Caco-2 (cell line): ENCODE measurements at regions of chr10 and their contacts with region 1.

Region 1: GRCh38 chr10:71270301-71271220 is 48.5 kb upstream of the SLC29A3 start:
- DNase-seq: peak; percentile 80 to 86
- H3K4me3 ChIP-seq: no peak overlapping the region
- H3K4me3 Mint-ChIP-seq: no peak overlapping the region
- H3K27ac Mint-ChIP-seq: peak overlapping the region; percentile 60
- H3K4me1 ChIP-seq: 0 out of 2 replicates have a peak, but pooled peaks cover 14% of the 10 kb centered on the region
- H3K4me1 Mint-ChIP-seq: peaks cover 19% of the 10 kb centered on the region
- H3K27me3 ChIP-seq: no peaks in the 10 kb centered on the region
- H3K27me3 Mint-ChIP-seq: no peaks in the 10 kb centered on the region
- CTCF ChIP-seq: peak; percentile 79 to 98

Region 2: DNA sequence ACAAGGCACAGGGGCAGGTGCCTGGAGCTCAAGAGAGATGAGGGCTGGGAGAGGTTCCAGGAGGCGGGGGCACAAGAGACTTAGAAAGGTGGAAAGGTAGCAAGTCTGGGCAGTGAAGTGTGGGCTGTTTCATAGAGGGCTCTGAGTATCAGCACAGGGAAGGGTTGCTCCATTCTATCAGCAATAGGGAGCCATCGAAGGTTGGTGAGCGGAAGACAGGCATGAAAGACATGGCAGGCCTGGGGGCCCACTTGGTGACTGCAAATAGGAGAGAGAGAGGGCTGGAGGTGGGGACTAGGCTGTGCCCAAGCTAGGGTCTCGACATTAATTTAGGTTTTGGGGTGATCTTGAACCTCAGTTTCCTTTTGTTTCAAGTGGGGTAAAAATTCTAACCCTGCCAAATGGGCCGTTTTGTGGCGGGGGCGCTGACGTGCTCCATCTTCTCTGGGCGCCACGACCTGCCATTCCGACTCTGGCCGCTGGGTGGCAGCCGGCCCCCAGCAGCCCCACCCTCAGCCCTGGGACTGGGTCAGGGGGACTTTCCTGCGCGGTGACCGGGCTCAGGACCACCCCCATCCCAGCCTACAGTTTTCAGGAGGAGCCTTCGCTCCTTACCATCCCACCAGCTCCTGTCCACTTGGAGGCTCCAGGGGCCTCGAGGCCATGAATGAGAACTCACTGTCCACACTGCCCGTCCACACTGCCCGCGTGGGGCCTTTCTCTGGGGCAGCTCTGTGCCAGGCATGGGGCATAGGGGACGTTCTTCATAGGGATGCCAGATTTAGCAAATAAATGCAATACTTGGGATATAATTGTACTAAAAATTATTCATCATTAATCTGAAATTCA is 345.0 kb before region 1 on chr10:
- CTCF ChIA-PET with region 1: interaction called, 3 read pairs
- POLR2A ChIA-PET with region 1: no interaction called
- intact Hi-C with region 1: loop called (anchors 5 kb)
- DNase-seq: peak in 1 of 2 experiments; percentile 83
- H3K4me3 ChIP-seq: no peak overlapping the region
- H3K4me3 Mint-ChIP-seq: no peak overlapping the region
- H3K27ac Mint-ChIP-seq: no peak overlapping the region
- H3K4me1 ChIP-seq: no peaks in the 10 kb centered on the region
- H3K4me1 Mint-ChIP-seq: peaks cover 8% of the 10 kb centered on the region
- H3K27me3 ChIP-seq: peaks cover 4% of the 10 kb centered on the region; the same call in 1 of the 2 replicates
- H3K27me3 Mint-ChIP-seq: peaks cover 6% of the 10 kb centered on the region
- CTCF ChIP-seq: peak; percentile 99 to 100

Region 3: GRCh38 chr10:71229726-71230655 is 40.6 kb before region 1 on chr10:
- CTCF ChIA-PET with region 1: interaction called, 10 read pairs
- POLR2A ChIA-PET with region 1: no interaction called
- intact Hi-C with region 1: no loop called
- DNase-seq: peak; percentile 51 to 79
- H3K4me3 ChIP-seq: no peak overlapping the region
- H3K4me3 Mint-ChIP-seq: no peak overlapping the region
- H3K27ac Mint-ChIP-seq: peak overlapping the region; percentile 12
- H3K4me1 ChIP-seq: peaks cover 49% of the 10 kb centered on the region
- H3K4me1 Mint-ChIP-seq: peaks cover 39% of the 10 kb centered on the region
- H3K27me3 ChIP-seq: no peaks in the 10 kb centered on the region
- H3K27me3 Mint-ChIP-seq: no peaks in the 10 kb centered on the region
- CTCF ChIP-seq: no peak

Region 4: GRCh38 chr10:71244431-71245419 is 25.8 kb before region 1 on chr10:
- CTCF ChIA-PET with region 1: interaction called, 36 read pairs
- POLR2A ChIA-PET with region 1: interaction called, 10 read pairs
- intact Hi-C with region 1: loop called (anchors 1 kb)
- DNase-seq: no peak
- H3K4me3 ChIP-seq: no peak overlapping the region
- H3K4me3 Mint-ChIP-seq: no peak overlapping the region
- H3K27ac Mint-ChIP-seq: peak overlapping the region; percentile 90
- H3K4me1 ChIP-seq: peaks cover 61% of the 10 kb centered on the region
- H3K4me1 Mint-ChIP-seq: peaks cover 40% of the 10 kb centered on the region
- H3K27me3 ChIP-seq: no peaks in the 10 kb centered on the region
- H3K27me3 Mint-ChIP-seq: no peaks in the 10 kb centered on the region
- CTCF ChIP-seq: no peak

Region 5: GRCh38 chr10:71252220-71252619 is 18.3 kb before region 1 on chr10:
- CTCF ChIA-PET with region 1: interaction called, 36 read pairs
- POLR2A ChIA-PET with region 1: interaction called, 10 read pairs
- intact Hi-C with region 1: loop called (anchors 1 kb)
- DNase-seq: peak; percentile 64 to 74
- H3K4me3 ChIP-seq: no peak overlapping the region
- H3K4me3 Mint-ChIP-seq: no peak overlapping the region
- H3K27ac Mint-ChIP-seq: peak overlapping the region; percentile 43
- H3K4me1 ChIP-seq: peaks cover 32% of the 10 kb centered on the region
- H3K4me1 Mint-ChIP-seq: peaks cover 25% of the 10 kb centered on the region
- H3K27me3 ChIP-seq: no peaks in the 10 kb centered on the region
- H3K27me3 Mint-ChIP-seq: no peaks in the 10 kb centered on the region
- CTCF ChIP-seq: no peak

Region 6: DNA sequence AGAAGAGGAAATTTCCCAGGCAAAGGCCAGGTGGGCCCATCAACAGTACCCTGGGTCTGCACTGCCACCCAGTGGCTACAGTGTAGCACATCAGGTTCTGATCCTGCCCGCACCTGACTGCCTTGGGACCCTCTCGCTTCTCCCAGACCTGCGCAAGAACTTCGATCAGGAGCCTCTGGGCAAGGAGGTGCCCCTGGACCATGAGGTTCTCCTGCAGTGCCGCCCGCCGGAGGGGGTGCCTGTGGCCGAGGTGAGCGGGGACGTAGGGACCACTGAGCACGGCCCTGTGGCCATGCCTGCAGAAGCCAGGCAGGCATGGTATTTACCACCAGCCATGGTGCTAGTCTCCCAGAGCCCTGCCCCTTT is 14.6 kb after region 1 on chr10:
- CTCF ChIA-PET with region 1: interaction called, 19 read pairs
- POLR2A ChIA-PET with region 1: interaction called, 3 read pairs
- intact Hi-C with region 1: loop called (anchors 1 kb)
- DNase-seq: peak; percentile 74 to 80
- H3K4me3 ChIP-seq: no peak overlapping the region
- H3K4me3 Mint-ChIP-seq: no peak overlapping the region
- H3K27ac Mint-ChIP-seq: no peak overlapping the region
- H3K4me1 ChIP-seq: peaks cover 12% of the 10 kb centered on the region
- H3K4me1 Mint-ChIP-seq: peaks cover 3% of the 10 kb centered on the region
- H3K27me3 ChIP-seq: no peaks in the 10 kb centered on the region
- H3K27me3 Mint-ChIP-seq: no peaks in the 10 kb centered on the region
- CTCF ChIP-seq: peak; percentile 97

Region 7: GRCh38 chr10:71290806-71291527 is 20.4 kb after region 1 on chr10:
- CTCF ChIA-PET with region 1: interaction called, 10 read pairs
- POLR2A ChIA-PET with region 1: interaction called, 3 read pairs
- intact Hi-C with region 1: no loop called
- DNase-seq: no peak
- H3K4me3 ChIP-seq: no peak overlapping the region
- H3K4me3 Mint-ChIP-seq: no peak overlapping the region
- H3K27ac Mint-ChIP-seq: no peak overlapping the region
- H3K4me1 ChIP-seq: peaks cover 20% of the 10 kb centered on the region
- H3K4me1 Mint-ChIP-seq: peaks cover 7% of the 10 kb centered on the region
- H3K27me3 ChIP-seq: no peaks in the 10 kb centered on the region
- H3K27me3 Mint-ChIP-seq: no peaks in the 10 kb centered on the region
- CTCF ChIP-seq: no peak

Region 8: GRCh38 chr10:71343392-71343773 is 72.8 kb after region 1 on chr10:
- CTCF ChIA-PET with region 1: no interaction called
- POLR2A ChIA-PET with region 1: no interaction called
- intact Hi-C with region 1: no loop called
- DNase-seq: peak; percentile 66 to 77
- H3K4me3 ChIP-seq: no peak overlapping the region
- H3K4me3 Mint-ChIP-seq: no peak overlapping the region
- H3K27ac Mint-ChIP-seq: peak overlapping the region; percentile 93
- H3K4me1 ChIP-seq: peaks cover 83% of the 10 kb centered on the region
- H3K4me1 Mint-ChIP-seq: peaks cover 73% of the 10 kb centered on the region
- H3K27me3 ChIP-seq: no peaks in the 10 kb centered on the region
- H3K27me3 Mint-ChIP-seq: no peaks in the 10 kb centered on the region
- CTCF ChIP-seq: no peak